ENCODE measurements at regions of chr1 and their contacts with region 1.

Region 1: DNA sequence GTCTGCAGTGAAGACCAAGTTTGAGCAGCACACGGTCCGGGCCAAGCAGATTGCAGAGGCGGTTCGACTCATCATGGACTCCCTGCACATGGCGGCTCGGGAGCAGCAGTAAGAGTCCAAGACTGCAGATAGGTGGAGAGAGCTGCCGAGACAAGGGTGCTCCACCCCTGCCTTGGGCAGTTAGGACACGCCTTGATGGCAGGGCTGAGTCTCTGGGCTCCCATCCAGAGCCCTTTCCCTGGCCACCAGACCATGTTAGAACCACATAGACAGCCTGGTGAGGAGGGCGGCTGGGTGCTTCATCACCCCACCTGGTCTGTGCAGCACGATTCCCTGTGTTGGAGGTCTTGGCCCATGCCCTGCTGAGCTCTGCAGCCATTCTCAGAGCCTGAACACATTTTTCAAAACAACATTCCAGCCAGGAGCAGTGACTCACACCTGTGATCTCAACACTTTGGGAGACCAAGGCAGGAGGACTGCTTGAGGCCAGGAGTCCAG is 17.3 kb upstream of the MIIP start:
- DNase-seq: no peak
- ATAC-seq: no peak; the same call in 2 of the 3 replicates
- H3K4me3 ChIP-seq: no peak overlapping the region
- H3K27ac ChIP-seq: no peak overlapping the region; the same call in 2 of the 3 replicates
- H3K4me1 ChIP-seq: peaks cover 24 to 30% of the 10 kb centered on the region in 2 experiments; a peak in 4 of 5 replicates
- H3K27me3 ChIP-seq: no peaks in the 10 kb centered on the region
- CTCF ChIP-seq: no peak
- EP300 ChIP-seq: no peak
- POLR2A ChIP-seq: no peak
- RAD21 ChIP-seq: no peak

Region 2: GRCh38 chr1:12014141-12014991 is 12.3 kb after region 1 on chr1:
- CTCF ChIA-PET with region 1: no interaction called
- POLR2A ChIA-PET with region 1: interaction called, 23 read pairs
- in situ Hi-C with region 1: no loop called
- intact Hi-C with region 1: loop called (anchors 1 kb)
- DNase-seq: peak; percentile 61 to 72 (median 64)
- ATAC-seq: peak; percentile 45
- H3K4me3 ChIP-seq: no peak overlapping the region
- H3K27ac ChIP-seq: peak overlapping the region; percentile 75
- H3K4me1 ChIP-seq: peaks cover 37 to 45% of the 10 kb centered on the region in 2 experiments
- H3K27me3 ChIP-seq: no peaks in the 10 kb centered on the region
- CTCF ChIP-seq: peak; percentile 36 to 56 (median 54); a peak in 5 of 6 replicates
- EP300 ChIP-seq: no peak
- POLR2A ChIP-seq: peak; percentile 60; the same call in 1 of the 2 replicates
- RAD21 ChIP-seq: 0 out of 4 replicates have a peak, but pooled peaks of 1 of the 2 experiments have one; percentile 3

Region 3: GRCh38 chr1:12031039-12031980 is 29.3 kb after region 1 on chr1:
- CTCF ChIA-PET with region 1: interaction called, 5 read pairs
- POLR2A ChIA-PET with region 1: interaction called, 4 read pairs
- in situ Hi-C with region 1: no loop called
- intact Hi-C with region 1: loop called (anchors 1 kb)
- DNase-seq: peak; percentile 70 to 83 (median 80)
- ATAC-seq: peak; percentile 94
- H3K4me3 ChIP-seq: no peak overlapping the region
- H3K27ac ChIP-seq: no peak overlapping the region
- H3K4me1 ChIP-seq: peaks cover 8 to 34% of the 10 kb centered on the region in 2 experiments; a peak in 4 of 5 replicates
- H3K27me3 ChIP-seq: no peaks in the 10 kb centered on the region
- CTCF ChIP-seq: peak; percentile 88 to 91 (median 89)
- EP300 ChIP-seq: no peak
- POLR2A ChIP-seq: no peak
- RAD21 ChIP-seq: peak; percentile 80 to 90